B cell (primary cell): ENCODE measurements at regions of chr10 and their contacts with region 1.

Region 1: GRCh38 chr10:60549686-60550085 is 160.0 kb upstream of the ANK3 start:
- DNase-seq: no peak
- ATAC-seq: peak; percentile 33
- H3K4me3 ChIP-seq: no peak overlapping the region
- H3K4me3 Mint-ChIP-seq: no peak overlapping the region
- H3K27ac ChIP-seq: no peak overlapping the region
- H3K27ac Mint-ChIP-seq: no peak overlapping the region
- H3K4me1 ChIP-seq: no peaks in the 10 kb centered on the region
- H3K4me1 Mint-ChIP-seq: no peaks in the 10 kb centered on the region
- H3K27me3 ChIP-seq: no peaks in the 10 kb centered on the region
- H3K27me3 Mint-ChIP-seq: no peaks in the 10 kb centered on the region
- CTCF ChIP-seq: no peak

Region 2: GRCh38 chr10:60560451-60560850 is 10.8 kb after region 1 on chr10:
- CTCF ChIA-PET with region 1: no interaction called
- POLR2A ChIA-PET with region 1: no interaction called
- intact Hi-C with region 1: no loop called
- DNase-seq: no peak
- ATAC-seq: no peak
- H3K4me3 ChIP-seq: no peak overlapping the region
- H3K4me3 Mint-ChIP-seq: no peak overlapping the region
- H3K27ac ChIP-seq: no peak overlapping the region
- H3K27ac Mint-ChIP-seq: no peak overlapping the region
- H3K4me1 ChIP-seq: no peaks in the 10 kb centered on the region
- H3K4me1 Mint-ChIP-seq: peaks cover 6% of the 10 kb centered on the region
- H3K27me3 ChIP-seq: no peaks in the 10 kb centered on the region
- H3K27me3 Mint-ChIP-seq: no peaks in the 10 kb centered on the region
- CTCF ChIP-seq: no peak

Region 3: DNA sequence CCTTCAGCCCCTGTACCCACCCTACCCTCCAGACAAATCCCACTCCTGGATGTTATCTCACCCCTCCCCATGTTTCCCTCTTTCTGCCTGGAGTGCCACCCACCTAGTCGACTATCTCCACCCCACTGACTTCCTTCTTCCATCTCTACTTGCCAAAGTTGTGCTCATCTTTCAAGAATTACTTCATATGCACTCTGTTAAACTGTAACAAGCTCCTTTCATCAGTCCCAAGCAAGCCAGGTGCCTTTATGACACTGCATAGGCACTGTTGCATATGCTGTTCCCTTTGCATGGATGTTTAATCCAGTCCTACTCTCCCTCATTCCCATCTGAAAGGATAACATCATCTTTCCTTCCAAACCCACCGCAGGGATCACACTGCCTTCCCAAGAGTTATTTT is 219.7 kb after region 1 on chr10:
- CTCF ChIA-PET with region 1: no interaction called
- POLR2A ChIA-PET with region 1: no interaction called
- intact Hi-C with region 1: loop called (anchors 5 kb)
- DNase-seq: no peak
- ATAC-seq: no peak
- H3K4me3 ChIP-seq: no peak overlapping the region
- H3K4me3 Mint-ChIP-seq: no peak overlapping the region
- H3K27ac ChIP-seq: no peak overlapping the region
- H3K27ac Mint-ChIP-seq: no peak overlapping the region
- H3K4me1 ChIP-seq: no peaks in the 10 kb centered on the region
- H3K4me1 Mint-ChIP-seq: peaks cover 2% of the 10 kb centered on the region
- H3K27me3 ChIP-seq: no peaks in the 10 kb centered on the region
- H3K27me3 Mint-ChIP-seq: no peaks in the 10 kb centered on the region
- CTCF ChIP-seq: no peak